Ovary (tissue), 10 donors: ENCODE measurements at regions of chr12 and their contacts with region 1.

Region 1: DNA sequence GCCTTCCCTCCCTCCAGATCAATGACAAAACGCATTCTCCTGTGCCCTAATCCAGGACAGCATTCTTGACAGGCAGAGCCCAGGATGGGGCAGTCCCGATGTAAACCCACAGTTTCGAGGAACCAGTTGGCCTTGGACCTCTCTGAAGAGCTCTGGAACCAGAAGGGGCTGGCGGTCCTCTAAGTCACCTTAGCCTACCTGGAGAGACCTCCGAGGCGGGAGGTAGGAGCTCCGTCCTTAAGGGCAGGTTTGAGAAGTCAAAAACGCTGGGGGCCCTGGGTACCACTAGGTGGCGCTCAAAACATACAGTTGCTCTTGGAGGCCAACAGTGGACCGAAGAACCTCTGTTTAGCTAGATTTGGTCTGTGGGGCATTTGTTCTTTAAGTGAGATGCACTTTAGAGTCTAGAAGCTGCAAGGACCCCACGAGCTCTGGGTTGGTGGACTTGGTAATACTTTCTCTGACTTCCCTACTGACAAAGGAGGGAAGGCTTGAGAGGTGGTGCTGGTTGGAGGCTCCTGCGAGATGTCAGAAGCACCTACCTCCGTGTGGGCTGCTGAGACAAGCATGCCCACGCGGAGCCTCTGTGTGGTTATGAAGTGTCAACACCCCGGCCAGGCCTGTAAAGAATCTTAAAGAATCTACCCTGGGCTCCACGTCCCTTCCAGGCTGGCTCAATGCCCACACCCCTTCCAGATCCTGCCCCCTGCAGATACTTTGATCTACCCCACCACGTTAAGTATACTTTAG is 74.8 kb upstream of the CHST11 start:
- DNase-seq: peak; percentile 73 to 87 (median 82)
- H3K4me3 ChIP-seq: no peak overlapping the region
- H3K27ac ChIP-seq: no peak overlapping the region
- H3K4me1 ChIP-seq: no peaks in the 10 kb centered on the region
- H3K27me3 ChIP-seq: no peaks in the 10 kb centered on the region
- CTCF ChIP-seq: peak; percentile 74 to 91 (median 84)
- EP300 ChIP-seq: no peak
- POLR2A ChIP-seq: no peak

Region 2: DNA sequence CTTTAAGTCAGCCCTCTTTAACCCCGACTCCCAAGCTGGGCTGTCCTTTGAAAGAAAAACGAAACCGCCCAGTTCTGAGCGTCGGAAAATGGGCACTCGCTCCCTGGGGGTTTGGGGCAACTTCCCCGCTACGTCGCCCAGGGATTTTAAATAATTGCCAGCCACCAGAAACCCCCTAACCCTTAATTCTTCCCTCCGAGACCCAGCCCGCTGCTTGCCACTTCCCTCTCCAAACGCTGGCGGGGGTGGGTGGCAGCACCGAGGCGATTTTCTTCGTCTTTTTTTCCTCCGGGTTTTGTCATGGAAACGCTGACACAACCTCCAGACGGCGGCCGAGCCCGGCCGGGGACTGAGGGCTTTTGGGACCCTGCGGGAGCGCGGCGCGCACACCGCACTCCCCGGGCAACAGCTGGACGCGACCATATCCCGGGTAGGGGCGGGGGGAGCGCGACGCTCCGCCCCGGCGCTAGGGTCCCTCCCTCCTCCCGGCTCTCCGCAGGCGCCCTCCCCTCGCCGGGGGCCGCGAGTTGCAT is 74.6 kb after region 1 on chr12 and contains the start of gene CHST11:
- intact Hi-C with region 1: no loop called
- DNase-seq: peak; percentile 72 to 84 (median 73)
- H3K4me3 ChIP-seq: peak within 1 kb of the TSS; percentile 72
- H3K27ac ChIP-seq: peak within 1 kb of the TSS; percentile 39 to 57
- H3K4me1 ChIP-seq: no peaks in the 10 kb centered on the region
- H3K27me3 ChIP-seq: no peaks in the 10 kb centered on the region
- CTCF ChIP-seq: peak in 1 of 3 donors; percentile 28
- EP300 ChIP-seq: no peak
- POLR2A ChIP-seq: no peak
- total RNA-seq, gene CHST11: 4.2 to 39.9 (median 20.1) TPM

Region 3: GRCh38 chr12:104877123-104877705 is 495.3 kb after region 1 on chr12:
- intact Hi-C with region 1: loop called (anchors 5 kb)
- DNase-seq: peak; percentile 37 to 64 (median 44)
- H3K4me3 ChIP-seq: no peak overlapping the region
- H3K27ac ChIP-seq: no peak overlapping the region
- H3K4me1 ChIP-seq: no peaks in the 10 kb centered on the region
- H3K27me3 ChIP-seq: no peaks in the 10 kb centered on the region
- CTCF ChIP-seq: peak; percentile 52 to 90 (median 77)
- EP300 ChIP-seq: no peak
- POLR2A ChIP-seq: no peak

Region 4: GRCh38 chr12:105053116-105053572 is 671.2 kb after region 1 on chr12:
- intact Hi-C with region 1: loop called (anchors 5 to 10 kb)
- DNase-seq: peak; percentile 40 to 78 (median 62)
- H3K4me3 ChIP-seq: no peak overlapping the region
- H3K27ac ChIP-seq: no peak overlapping the region
- H3K4me1 ChIP-seq: peaks cover 1% of the 10 kb centered on the region
- H3K27me3 ChIP-seq: no peaks in the 10 kb centered on the region
- CTCF ChIP-seq: peak; percentile 78 to 81 (median 78)
- EP300 ChIP-seq: no peak
- POLR2A ChIP-seq: no peak